GM12878 (cell line): ENCODE measurements at regions of chr20 and their contacts with region 1.

Region 1: GRCh38 chr20:58659841-58660240 is 8.8 kb downstream of the STX16 start:
- DNase-seq: no peak
- ATAC-seq: peak; percentile 13; the same call in 1 of the 3 replicates
- H3K4me3 ChIP-seq: no peak overlapping the region
- H3K27ac ChIP-seq: no peak overlapping the region
- H3K4me1 ChIP-seq: peaks cover 13% of the 10 kb centered on the region
- H3K27me3 ChIP-seq: no peaks in the 10 kb centered on the region
- CTCF ChIP-seq: no peak
- EP300 ChIP-seq: no peak
- POLR2A ChIP-seq: no peak
- RAD21 ChIP-seq: no peak

Region 2: GRCh38 chr20:58692594-58693226 is 32.9 kb after region 1 on chr20 and contains the start of gene NPEPL1:
- CTCF ChIA-PET with region 1: interaction called, 6 read pairs
- POLR2A ChIA-PET with region 1: interaction called, 4 read pairs
- RAD21 ChIA-PET with region 1: interaction called, 3 read pairs
- SMC1A ChIA-PET with region 1: interaction called, 10 read pairs
- in situ Hi-C with region 1: no loop called
- intact Hi-C with region 1: no loop called
- DNase-seq: no peak
- ATAC-seq: peak; percentile 97
- H3K4me3 ChIP-seq: peak within 1 kb of the TSS; percentile 75
- H3K27ac ChIP-seq: 0 out of 2 replicates have a peak within 1 kb of the TSS, but pooled peaks have one; percentile 25
- H3K4me1 ChIP-seq: peaks cover 5% of the 10 kb centered on the region
- H3K27me3 ChIP-seq: no peaks in the 10 kb centered on the region
- CTCF ChIP-seq: peak in 2 of 3 experiments; percentile 36 to 49; a peak in 3 of 6 replicates
- EP300 ChIP-seq: no peak
- POLR2A ChIP-seq: 0 out of 2 replicates have a peak, but pooled peaks have one; percentile 58
- RAD21 ChIP-seq: peak; percentile 44
- polyA plus RNA-seq, gene NPEPL1: 0.08 to 0.80 TPM